ENCODE measurements at regions of chrX and their contacts with region 1.

Region 1: DNA sequence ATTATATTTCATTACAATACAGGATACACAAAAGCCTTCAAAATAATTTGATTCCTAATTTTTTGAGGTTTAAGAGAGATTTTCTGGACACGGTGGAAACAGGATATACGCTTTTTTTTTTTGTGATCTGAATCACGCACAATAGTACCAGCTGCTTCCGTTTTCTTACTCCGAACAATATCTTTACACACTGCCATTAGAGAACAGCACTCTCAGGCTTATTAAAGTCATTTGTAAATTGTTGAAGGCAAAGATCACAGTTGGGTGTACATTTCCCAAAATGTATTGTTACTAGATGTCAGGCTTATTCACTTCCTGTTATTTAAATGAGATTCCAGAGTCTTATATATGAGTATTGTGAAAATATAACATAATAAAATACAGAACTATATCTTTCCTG is 71.5 kb downstream of the TMEM47 start:
- DNase-seq: peak; percentile 94
- H3K4me3 ChIP-seq: peak overlapping the region; percentile 23
- H3K27ac ChIP-seq: peak overlapping the region; percentile 85
- H3K4me1 ChIP-seq: peaks cover 21% of the 10 kb centered on the region
- H3K27me3 ChIP-seq: no peaks in the 10 kb centered on the region
- CTCF ChIP-seq: no peak

Region 2: GRCh38 chrX:34656842-34657725 is 71.5 kb after region 1 on chrX and contains the start of gene TMEM47:
- CTCF ChIA-PET with region 1: no interaction called
- POLR2A ChIA-PET with region 1: no interaction called
- intact Hi-C with region 1: loop called (anchors 2 kb)
- DNase-seq: peak; percentile 84
- H3K4me3 ChIP-seq: peak within 1 kb of the TSS; percentile 61
- H3K27ac ChIP-seq: peak within 1 kb of the TSS; percentile 74
- H3K4me1 ChIP-seq: peaks cover 5% of the 10 kb centered on the region
- H3K27me3 ChIP-seq: no peaks in the 10 kb centered on the region
- CTCF ChIP-seq: no peak
- total RNA-seq, gene TMEM47: 35.9 and 36.4 TPM in 2 replicates

Region 3: GRCh38 chrX:34716302-34716701 is 130.7 kb after region 1 on chrX:
- CTCF ChIA-PET with region 1: no interaction called
- POLR2A ChIA-PET with region 1: no interaction called
- intact Hi-C with region 1: loop called (anchors 1 kb)
- DNase-seq: no peak
- H3K4me3 ChIP-seq: no peak overlapping the region
- H3K27ac ChIP-seq: peak overlapping the region; percentile 44
- H3K4me1 ChIP-seq: peaks cover 15% of the 10 kb centered on the region
- H3K27me3 ChIP-seq: no peaks in the 10 kb centered on the region
- CTCF ChIP-seq: no peak

Region 4: DNA sequence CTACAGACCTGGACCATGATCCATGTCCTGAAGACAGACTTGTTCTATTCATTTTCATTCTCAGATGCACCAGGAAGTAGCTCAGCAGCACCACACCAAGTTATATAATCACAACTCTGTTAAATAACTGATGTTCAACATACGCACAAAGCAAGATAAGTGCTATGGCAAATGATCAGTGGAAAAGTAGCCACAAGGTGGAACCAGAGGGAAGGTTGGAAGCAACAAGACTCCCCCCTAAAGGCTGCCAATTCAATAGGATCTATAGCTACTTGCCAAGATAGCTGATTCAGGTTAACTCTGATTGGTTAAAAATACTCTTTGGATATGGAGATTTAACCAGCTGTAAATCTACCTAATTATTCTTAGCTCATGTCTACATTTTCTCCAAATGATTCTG is 333.3 kb after region 1 on chrX:
- CTCF ChIA-PET with region 1: no interaction called
- POLR2A ChIA-PET with region 1: no interaction called
- intact Hi-C with region 1: loop called (anchors 10 kb)
- DNase-seq: peak; percentile 82
- H3K4me3 ChIP-seq: no peak overlapping the region
- H3K27ac ChIP-seq: no peak overlapping the region
- H3K4me1 ChIP-seq: peaks cover 3% of the 10 kb centered on the region
- H3K27me3 ChIP-seq: no peaks in the 10 kb centered on the region
- CTCF ChIP-seq: peak; percentile 72

Region 5: DNA sequence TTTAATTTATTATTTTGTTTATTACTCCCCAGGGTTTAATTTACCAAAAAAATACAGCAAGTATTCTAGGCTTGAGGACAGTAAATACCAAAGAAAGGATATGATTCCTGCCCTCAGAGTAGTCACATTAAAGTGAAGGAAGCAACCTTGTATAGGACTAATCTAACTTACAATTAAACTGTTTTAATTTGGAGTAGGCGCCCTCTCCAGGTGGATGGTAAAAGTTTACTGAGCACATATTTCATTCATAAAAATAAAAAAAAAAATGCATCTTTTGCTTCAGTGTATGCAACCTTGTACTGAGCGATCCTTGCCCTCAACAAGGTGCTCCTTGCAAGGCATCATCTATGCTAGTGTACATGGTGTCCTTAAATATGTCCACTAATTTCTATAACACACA is 1140.6 kb after region 1 on chrX:
- CTCF ChIA-PET with region 1: no interaction called
- POLR2A ChIA-PET with region 1: no interaction called
- intact Hi-C with region 1: no loop called
- DNase-seq: peak; percentile 53
- H3K4me3 ChIP-seq: no peak overlapping the region
- H3K27ac ChIP-seq: no peak overlapping the region
- H3K4me1 ChIP-seq: no peaks in the 10 kb centered on the region
- H3K27me3 ChIP-seq: no peaks in the 10 kb centered on the region
- CTCF ChIP-seq: peak; percentile 54

Measured in A673 (cell line).